ENCODE measurements at regions of chrX and their contacts with region 1.

Region 1: GRCh38 chrX:20001588-20001987 is 10.7 kb upstream of the BCLAF3 start:
- DNase-seq: no peak
- ATAC-seq: no peak

Region 2: DNA sequence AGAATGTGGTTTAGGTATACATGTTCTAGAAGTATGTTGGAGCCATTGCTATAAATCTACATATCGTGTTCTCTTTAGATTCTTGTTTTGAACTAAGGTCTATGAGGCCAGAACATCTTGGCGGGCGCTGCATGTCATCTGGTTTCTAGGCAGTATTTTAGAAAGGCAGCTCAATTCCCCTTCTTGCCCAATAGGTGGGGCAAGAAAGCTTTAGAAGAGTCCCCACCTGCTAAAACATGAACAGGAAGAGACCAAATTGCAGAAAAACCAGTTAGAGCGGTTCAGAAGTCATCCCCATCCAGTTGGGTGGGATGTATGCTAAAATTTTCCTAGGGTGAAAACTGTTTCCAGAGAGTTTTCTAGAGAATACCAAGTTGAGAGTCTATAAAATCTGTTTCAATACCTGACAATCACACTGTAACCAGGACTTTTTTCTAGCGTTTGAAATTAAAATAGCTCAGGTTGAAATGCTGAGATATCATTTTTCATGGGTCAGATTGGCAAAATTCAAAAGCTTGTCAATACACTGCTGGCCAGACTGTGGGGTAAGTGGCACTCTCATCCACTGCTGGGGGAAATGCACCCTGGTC is 96.7 kb before region 1 on chrX:
- intact Hi-C with region 1: loop called in 1 of 2 experiments (anchors 10 kb)
- DNase-seq: peak in 1 of 2 donors; percentile 26
- ATAC-seq: peak; percentile 76